Colonic mucosa (tissue), 4 donors: ENCODE measurements at regions of chr11 and their contacts with region 1.

Region 1: DNA sequence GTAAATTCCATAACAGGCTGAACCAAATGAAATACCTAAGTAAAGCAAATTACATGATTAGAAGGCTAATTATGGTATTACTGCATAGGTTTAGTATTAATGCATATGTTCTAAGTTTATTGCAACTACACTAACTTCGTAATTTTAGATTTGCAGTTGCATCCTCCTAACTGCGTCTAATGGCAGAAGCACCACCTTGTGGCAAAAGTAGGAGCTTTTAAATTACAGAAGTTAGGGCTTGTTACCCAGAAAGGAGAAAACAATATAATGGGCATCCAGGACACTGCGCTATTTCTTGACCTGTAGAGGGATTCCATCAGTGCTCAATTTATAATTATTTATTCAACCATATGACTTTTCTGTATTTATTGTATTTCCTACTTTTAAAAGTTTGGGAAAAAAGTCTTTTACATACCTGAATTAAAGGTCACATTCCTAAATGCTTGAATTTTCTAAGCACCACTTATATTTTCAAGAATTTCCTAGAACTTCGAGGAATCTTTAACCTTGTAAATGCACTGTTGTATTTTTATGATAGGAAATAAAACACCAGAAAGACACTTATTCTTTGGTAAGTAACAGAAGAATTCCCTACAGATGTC is 16.3 kb upstream of the GPR83 start:
- DNase-seq: no peak
- H3K4me3 ChIP-seq: no peak overlapping the region
- H3K27ac ChIP-seq: no peak overlapping the region
- H3K4me1 ChIP-seq: no peaks in the 10 kb centered on the region
- H3K27me3 ChIP-seq: no peaks in the 10 kb centered on the region
- CTCF ChIP-seq: peak; percentile 45

Region 2: GRCh38 chr11:93895106-93895862 is 522.2 kb before region 1 on chr11:
- intact Hi-C with region 1: loop called (anchors 10 kb)
- DNase-seq: peak; percentile 21
- H3K4me3 ChIP-seq: no peak overlapping the region
- H3K27ac ChIP-seq: no peak overlapping the region
- H3K4me1 ChIP-seq: no peaks in the 10 kb centered on the region
- H3K27me3 ChIP-seq: no peaks in the 10 kb centered on the region
- CTCF ChIP-seq: peak; percentile 49

Region 3: DNA sequence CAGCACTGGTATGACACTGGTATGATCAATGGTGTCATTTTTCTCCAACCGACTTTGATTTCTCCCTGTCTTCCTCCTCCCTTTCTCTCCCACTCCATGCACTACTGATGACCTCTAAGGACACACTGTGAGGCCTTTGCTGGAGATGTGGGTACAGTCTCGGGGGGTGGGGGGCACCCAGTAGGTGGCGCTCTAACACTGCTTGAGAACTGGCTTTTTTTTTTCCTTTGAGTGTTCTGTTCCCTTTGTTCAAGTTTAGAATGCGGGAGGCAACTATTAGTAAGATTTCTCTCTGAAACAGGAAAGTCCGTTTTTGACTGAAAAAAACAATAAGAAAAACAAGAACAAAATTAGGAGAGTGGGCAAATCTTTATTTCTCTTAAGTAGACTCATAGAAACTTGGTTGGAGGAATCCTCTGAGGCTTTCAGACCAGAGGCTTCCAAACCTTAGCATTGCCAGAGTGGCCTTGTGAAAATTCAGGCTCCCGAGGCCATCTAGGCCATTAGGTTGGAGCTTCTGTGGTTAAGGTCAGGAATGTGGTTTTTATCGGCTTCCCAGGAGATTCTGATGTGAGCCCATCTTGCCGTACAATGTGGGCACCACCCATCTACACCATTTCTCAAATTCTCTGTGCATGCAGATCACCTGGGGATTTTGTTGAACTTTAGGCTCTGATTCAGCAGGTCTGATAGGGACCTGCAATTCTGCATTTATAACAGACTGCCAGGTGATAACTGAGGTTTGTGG is 245.6 kb before region 1 on chr11:
- intact Hi-C with region 1: loop called (anchors 5 kb)
- DNase-seq: peak; percentile 41
- H3K4me3 ChIP-seq: no peak overlapping the region
- H3K27ac ChIP-seq: no peak overlapping the region
- H3K4me1 ChIP-seq: no peaks in the 10 kb centered on the region
- H3K27me3 ChIP-seq: no peaks in the 10 kb centered on the region
- CTCF ChIP-seq: peak; percentile 73

Region 4: DNA sequence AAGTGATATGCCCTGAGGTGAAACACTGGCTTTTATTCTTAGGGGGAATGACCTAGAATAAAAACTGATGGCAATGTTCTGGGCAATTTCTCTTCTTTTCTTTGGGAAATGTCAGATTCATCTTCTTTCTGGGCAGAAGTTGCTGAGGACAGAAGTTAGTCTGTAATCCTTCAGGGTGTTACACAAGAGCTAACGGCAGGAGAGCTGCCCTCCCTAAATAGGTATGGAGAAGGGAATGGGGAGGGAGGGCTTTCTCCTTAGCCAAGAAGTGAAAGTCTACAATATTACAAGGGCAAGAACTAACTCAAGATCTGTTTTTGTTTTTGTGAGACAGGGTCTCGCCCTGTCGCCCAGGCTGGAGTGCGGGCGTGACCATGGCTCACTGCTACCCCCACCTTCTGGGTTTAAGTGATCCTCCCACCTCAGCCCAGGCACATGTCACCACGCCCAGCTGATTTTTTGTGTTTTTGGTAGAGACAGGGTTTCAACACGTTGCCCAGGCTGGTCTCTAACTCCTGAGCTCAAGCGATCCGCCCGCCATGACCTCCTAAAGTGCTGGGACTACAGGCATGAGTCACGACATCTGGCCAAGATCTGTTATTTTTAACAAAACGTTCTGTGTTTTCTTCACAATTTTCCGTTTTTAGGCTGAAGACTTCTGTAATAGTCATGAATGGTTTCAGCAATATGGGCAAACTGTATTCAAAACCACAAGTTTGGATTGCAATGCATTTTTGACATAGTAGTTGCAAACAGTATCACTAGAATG is 156.9 kb after region 1 on chr11:
- intact Hi-C with region 1: no loop called
- DNase-seq: no peak
- H3K4me3 ChIP-seq: no peak overlapping the region
- H3K27ac ChIP-seq: no peak overlapping the region
- H3K4me1 ChIP-seq: no peaks in the 10 kb centered on the region
- H3K27me3 ChIP-seq: no peaks in the 10 kb centered on the region
- CTCF ChIP-seq: no peak

Region 5: GRCh38 chr11:94638902-94639373 is 221.5 kb after region 1 on chr11:
- intact Hi-C with region 1: no loop called
- DNase-seq: no peak
- H3K4me3 ChIP-seq: no peak overlapping the region
- H3K27ac ChIP-seq: peak overlapping the region; percentile 39
- H3K4me1 ChIP-seq: no peaks in the 10 kb centered on the region
- H3K27me3 ChIP-seq: no peaks in the 10 kb centered on the region
- CTCF ChIP-seq: no peak